CD14-positive monocyte (primary cell): ENCODE measurements at regions of chr1 and their contacts with region 1.

Region 1: DNA sequence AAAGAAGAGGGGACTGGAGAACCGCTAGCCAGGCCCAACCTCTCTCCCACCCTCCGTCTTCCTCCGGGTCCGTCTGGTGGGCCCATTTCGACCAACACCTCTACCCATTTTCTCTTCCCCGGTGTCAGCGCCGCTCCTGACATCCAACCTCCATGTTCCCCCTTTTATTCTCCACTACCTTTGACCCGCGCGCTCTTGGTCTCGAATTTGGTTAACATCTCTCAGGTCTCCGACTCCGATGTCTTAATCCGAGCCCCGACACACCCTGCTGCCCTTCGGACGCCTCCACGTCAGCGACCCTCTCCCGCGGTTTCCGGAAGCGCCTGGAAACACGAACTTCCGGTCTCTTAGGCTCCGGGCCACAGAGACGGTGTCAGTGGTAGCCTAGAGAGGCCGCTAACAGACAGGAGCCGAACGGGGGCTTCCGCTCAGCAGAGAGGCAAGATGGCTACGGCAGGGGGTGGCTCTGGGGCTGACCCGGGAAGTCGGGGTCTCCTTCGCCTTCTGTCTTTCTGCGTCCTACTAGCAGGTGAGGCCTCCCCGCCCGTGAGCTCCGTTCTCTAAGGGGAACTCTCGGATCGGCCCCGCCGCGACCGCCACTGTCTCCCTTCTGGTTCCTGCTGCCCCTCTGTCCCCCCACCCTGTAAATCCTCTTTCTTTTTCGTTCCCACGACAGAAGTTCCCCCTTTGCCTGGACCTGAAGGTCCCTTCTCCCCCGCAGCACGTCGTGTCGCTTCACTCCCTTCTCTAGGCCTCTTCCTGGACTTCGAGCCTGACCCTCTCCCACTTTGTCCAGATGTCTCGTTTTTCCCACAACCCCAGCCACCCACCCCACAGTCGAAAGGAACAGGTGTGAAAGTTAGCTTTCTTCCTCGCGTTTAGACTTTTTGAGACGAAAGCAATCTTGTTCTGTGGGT is at the starts of genes COPA and NCSTN:
- DNase-seq: peak; percentile 93 to 96 (median 93)
- H3K4me3 ChIP-seq: peak within 1 kb of the TSS; percentile 67 to 97 (median 89)
- H3K4me3 Mint-ChIP-seq: peak within 1 kb of the TSS; percentile 99 to 100
- H3K27ac ChIP-seq: peak within 1 kb of the TSS; percentile 89 to 93
- H3K27ac Mint-ChIP-seq: peak within 1 kb of the TSS; percentile 97 to 100 (median 100)
- H3K4me1 ChIP-seq: peaks cover 80 to 89% of the 10 kb centered on the region in 2 donors
- H3K4me1 Mint-ChIP-seq: peaks cover 80% of the 10 kb centered on the region
- H3K27me3 ChIP-seq: no peaks in the 10 kb centered on the region
- H3K27me3 Mint-ChIP-seq: peaks cover 0 to 1% (median 0%) of the 10 kb centered on the region in 3 donors
- CTCF ChIP-seq: no peak
- polyA plus RNA-seq, gene COPA: 76.7 to 199 (median 195) TPM
- polyA plus RNA-seq, gene NCSTN: 125 to 238 (median 145) TPM

Region 2: GRCh38 chr1:159924981-159925712 is 418.1 kb before region 1 on chr1 and contains the start of gene TAGLN2:
- intact Hi-C with region 1: loop called in 1 of 2 experiments (anchors 10 kb)
- DNase-seq: peak; percentile 82 to 92 (median 88)
- H3K4me3 ChIP-seq: peak within 1 kb of the TSS; percentile 76 to 96 (median 94)
- H3K4me3 Mint-ChIP-seq: peak within 1 kb of the TSS; percentile 96 to 97
- H3K27ac ChIP-seq: peak within 1 kb of the TSS; percentile 95 to 99
- H3K27ac Mint-ChIP-seq: peak within 1 kb of the TSS; percentile 97 to 100 (median 100)
- H3K4me1 ChIP-seq: peaks cover 39 to 43% of the 10 kb centered on the region in 2 donors
- H3K4me1 Mint-ChIP-seq: peaks cover 42% of the 10 kb centered on the region
- H3K27me3 ChIP-seq: no peaks in the 10 kb centered on the region
- H3K27me3 Mint-ChIP-seq: peaks cover 5 to 18% (median 11%) of the 10 kb centered on the region in 3 donors
- CTCF ChIP-seq: no peak
- polyA plus RNA-seq, gene TAGLN2: 658 to 1,259 (median 918) TPM

Region 3: DNA sequence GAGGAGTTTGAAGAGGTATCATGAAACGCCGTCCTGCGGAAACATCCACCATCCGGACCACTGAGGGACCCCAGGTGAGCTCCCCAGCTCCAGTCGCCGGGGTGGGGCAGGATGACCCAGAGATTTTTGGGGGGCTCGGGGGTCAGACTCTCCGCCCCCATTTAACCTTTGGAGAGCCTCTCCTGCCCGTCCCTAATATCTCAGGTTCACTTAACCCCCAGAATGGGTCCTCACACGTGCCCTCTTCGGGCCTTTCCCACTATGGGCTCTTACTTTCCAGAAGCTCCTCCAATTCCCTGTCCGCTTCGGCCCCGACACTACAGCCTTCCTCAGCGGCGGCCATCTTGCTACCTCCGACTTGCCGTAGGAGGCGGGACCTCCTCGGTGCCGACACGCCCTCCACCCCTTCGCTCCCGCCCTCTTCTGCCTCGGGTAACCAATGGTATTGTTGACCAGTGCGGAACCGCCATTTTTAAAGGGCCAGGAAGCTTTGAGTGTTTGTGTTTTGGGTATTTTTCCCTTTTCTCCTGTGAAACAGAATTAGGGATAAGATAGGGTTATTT is 58.3 kb before region 1 on chr1 and contains the start of gene PEX19:
- intact Hi-C with region 1: loop called (anchors 5 to 10 kb)
- DNase-seq: peak; percentile 84 to 94 (median 89)
- H3K4me3 ChIP-seq: peak within 1 kb of the TSS; percentile 82 to 90 (median 83)
- H3K4me3 Mint-ChIP-seq: peak within 1 kb of the TSS; percentile 92 to 97
- H3K27ac ChIP-seq: peak within 1 kb of the TSS; percentile 69 to 82
- H3K27ac Mint-ChIP-seq: peak within 1 kb of the TSS; percentile 86 to 96 (median 94)
- H3K4me1 ChIP-seq: peaks cover 19 to 22% of the 10 kb centered on the region in 2 donors
- H3K4me1 Mint-ChIP-seq: peaks cover 20% of the 10 kb centered on the region
- H3K27me3 ChIP-seq: no peaks in the 10 kb centered on the region
- H3K27me3 Mint-ChIP-seq: peaks cover 0 to 7% (median 0%) of the 10 kb centered on the region in 3 donors
- CTCF ChIP-seq: no peak
- polyA plus RNA-seq, gene PEX19: 17.4 to 38.2 (median 37.4) TPM

Region 4: GRCh38 chr1:160376525-160377131 is 33.4 kb after region 1 on chr1:
- intact Hi-C with region 1: loop called in 1 of 2 experiments (anchors 5 kb)
- DNase-seq: peak; percentile 45 to 71 (median 64)
- H3K4me3 ChIP-seq: peak overlapping the region in 1 of 3 experiments; percentile 66
- H3K4me3 Mint-ChIP-seq: peak overlapping the region in 1 of 2 donors; percentile 86
- H3K27ac ChIP-seq: peak overlapping the region in 1 of 2 donors; percentile 75
- H3K27ac Mint-ChIP-seq: peak overlapping the region in 2 of 7 donors; percentile 46 to 82
- H3K4me1 ChIP-seq: peaks cover 25 to 35% of the 10 kb centered on the region in 2 donors
- H3K4me1 Mint-ChIP-seq: peaks cover 36% of the 10 kb centered on the region
- H3K27me3 ChIP-seq: no peaks in the 10 kb centered on the region
- H3K27me3 Mint-ChIP-seq: peaks cover 1 to 6% (median 5%) of the 10 kb centered on the region in 3 donors
- CTCF ChIP-seq: peak; percentile 96